ENCODE measurements at regions of chr11 and their contacts with region 1.

Region 1: GRCh38 chr11:60781286-60781980 is 3.7 kb upstream of the MS4A10 start:
- DNase-seq: no peak
- ATAC-seq: no peak
- H3K4me3 ChIP-seq: no peak overlapping the region
- H3K27ac ChIP-seq: no peak overlapping the region
- H3K4me1 ChIP-seq: peaks cover 0 to 31% (median 8%) of the 10 kb centered on the region in 9 donors
- H3K27me3 ChIP-seq: no peaks in the 10 kb centered on the region
- CTCF ChIP-seq: no peak

Region 2: GRCh38 chr11:60717956-60718355 is 63.5 kb before region 1 on chr11:
- intact Hi-C with region 1: no loop called
- DNase-seq: no peak
- ATAC-seq: no peak
- H3K4me3 ChIP-seq: no peak overlapping the region
- H3K27ac ChIP-seq: no peak overlapping the region
- H3K4me1 ChIP-seq: no peaks in the 10 kb centered on the region
- H3K27me3 ChIP-seq: peaks cover 0 to 21% (median 0%) of the 10 kb centered on the region in 7 donors
- CTCF ChIP-seq: no peak

Region 3: DNA sequence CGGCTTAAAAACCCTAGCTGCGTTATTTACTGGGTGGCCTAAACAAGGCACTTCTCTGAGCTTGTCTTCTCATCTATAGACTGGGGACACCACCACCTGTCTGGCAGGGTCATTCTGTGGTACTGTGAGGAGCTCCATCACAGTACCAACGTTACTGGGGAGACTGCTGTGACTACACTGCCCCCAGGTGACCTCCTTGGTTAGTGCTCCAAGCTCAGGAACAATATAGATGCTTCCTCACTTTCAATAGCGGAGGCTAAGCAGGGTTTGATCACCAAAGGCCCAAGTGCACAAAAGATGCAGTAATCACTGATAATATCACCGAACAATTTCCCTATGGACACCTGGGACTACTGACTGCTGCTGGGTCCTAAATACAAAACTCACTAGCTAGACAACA is 106.1 kb after region 1 on chr11:
- intact Hi-C with region 1: loop called in 4 of 10 experiments (anchors 5 to 10 kb)
- DNase-seq: peak in 1 of 2 donors; percentile 43
- ATAC-seq: peak; percentile 65 to 86 (median 80)
- H3K4me3 ChIP-seq: no peak overlapping the region
- H3K27ac ChIP-seq: no peak overlapping the region
- H3K4me1 ChIP-seq: peaks cover 3 to 22% (median 15%) of the 10 kb centered on the region in 9 donors
- H3K27me3 ChIP-seq: no peaks in the 10 kb centered on the region
- CTCF ChIP-seq: peak in 8 of 9 donors; percentile 41 to 66 (median 62)

Measured in heart right ventricle (tissue), 16 donors.